Activated CD8-positive, alpha-beta T cell treated with anti-CD3 and anti-CD28 coated beads for 36 hours (primary cell): ENCODE measurements at regions of chr20 and their contacts with region 1.

Region 1: DNA sequence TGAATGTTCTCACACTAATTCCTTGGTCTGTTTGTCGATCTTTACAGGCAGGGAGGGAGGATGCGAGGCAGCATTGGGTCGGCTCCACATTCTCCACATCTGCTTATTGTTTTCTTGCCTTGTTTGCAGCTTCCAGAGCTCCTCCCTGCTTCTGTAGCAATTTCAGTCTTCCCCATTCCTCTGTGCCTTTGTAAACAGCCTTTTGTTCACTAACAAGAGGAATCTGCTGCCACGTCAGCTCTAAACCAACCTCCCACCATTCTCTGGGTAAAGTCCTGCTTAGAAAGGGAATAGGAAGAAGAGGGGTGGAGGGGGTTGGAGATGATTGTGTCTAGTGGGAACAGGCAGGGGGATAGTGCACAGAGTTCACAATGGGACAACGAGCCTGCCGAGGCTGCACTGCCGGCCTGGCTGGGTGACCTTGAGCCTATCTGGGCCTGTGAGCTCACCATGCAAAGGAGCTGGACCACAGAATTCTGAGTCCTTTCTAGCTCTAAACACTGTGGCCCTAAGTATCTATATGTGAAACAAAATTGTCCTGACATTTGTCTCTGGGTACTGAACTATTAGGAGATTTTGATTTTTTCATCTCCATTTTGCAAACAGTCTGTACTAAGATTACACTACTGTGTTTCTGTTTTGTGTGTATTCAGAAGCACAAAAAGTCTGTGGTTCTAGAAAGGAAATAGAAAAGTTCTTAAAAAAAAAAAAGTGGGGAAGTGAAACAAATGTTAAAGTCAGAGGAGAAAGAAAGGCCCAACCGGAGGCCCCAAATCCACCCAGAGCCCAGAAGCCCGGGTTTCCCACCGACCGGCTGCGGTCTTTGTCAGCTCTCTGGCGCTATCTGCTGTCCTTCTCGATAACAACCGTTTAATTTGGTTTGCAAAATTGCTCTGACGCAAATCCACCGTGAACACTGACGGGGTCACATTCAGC is 1.4 kb upstream of the PRND start:
- DNase-seq: peak; percentile 86
- ATAC-seq: peak; percentile 98
- H3K4me3 Mint-ChIP-seq: no peak overlapping the region
- H3K27ac Mint-ChIP-seq: peak overlapping the region; percentile 46
- H3K4me1 Mint-ChIP-seq: peaks cover 8% of the 10 kb centered on the region
- H3K27me3 Mint-ChIP-seq: no peaks in the 10 kb centered on the region
- CTCF ChIP-seq: peak; percentile 86

Region 2: DNA sequence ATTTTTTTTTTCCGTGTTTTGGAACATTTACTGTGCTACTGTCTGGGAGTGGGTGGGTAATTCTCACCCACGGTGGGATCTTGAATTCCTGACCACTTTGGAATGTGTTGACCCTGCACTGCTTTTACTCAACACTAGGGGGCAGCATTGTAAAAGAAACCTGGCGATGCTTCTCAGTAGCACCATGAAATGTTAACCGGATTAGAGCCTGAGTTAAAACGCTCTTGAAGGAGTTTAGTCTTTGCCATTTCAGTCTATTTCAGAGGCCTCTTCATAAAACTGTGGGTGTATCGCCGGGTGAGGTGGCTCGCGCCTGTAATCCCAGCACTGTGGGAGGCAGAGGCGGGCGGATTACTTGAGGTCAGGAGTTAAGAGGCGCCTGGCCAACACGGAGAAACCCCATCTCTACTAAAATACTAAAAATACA is 113.0 kb before region 1 on chr20:
- CTCF ChIA-PET with region 1: interaction called, 27 read pairs
- POLR2A ChIA-PET with region 1: no interaction called
- intact Hi-C with region 1: loop called (anchors 1 kb)
- DNase-seq: peak; percentile 66
- ATAC-seq: peak; percentile 79
- H3K4me3 Mint-ChIP-seq: no peak overlapping the region
- H3K27ac Mint-ChIP-seq: no peak overlapping the region
- H3K4me1 Mint-ChIP-seq: no peaks in the 10 kb centered on the region
- H3K27me3 Mint-ChIP-seq: peaks cover 5% of the 10 kb centered on the region
- CTCF ChIP-seq: peak; percentile 99

Region 3: DNA sequence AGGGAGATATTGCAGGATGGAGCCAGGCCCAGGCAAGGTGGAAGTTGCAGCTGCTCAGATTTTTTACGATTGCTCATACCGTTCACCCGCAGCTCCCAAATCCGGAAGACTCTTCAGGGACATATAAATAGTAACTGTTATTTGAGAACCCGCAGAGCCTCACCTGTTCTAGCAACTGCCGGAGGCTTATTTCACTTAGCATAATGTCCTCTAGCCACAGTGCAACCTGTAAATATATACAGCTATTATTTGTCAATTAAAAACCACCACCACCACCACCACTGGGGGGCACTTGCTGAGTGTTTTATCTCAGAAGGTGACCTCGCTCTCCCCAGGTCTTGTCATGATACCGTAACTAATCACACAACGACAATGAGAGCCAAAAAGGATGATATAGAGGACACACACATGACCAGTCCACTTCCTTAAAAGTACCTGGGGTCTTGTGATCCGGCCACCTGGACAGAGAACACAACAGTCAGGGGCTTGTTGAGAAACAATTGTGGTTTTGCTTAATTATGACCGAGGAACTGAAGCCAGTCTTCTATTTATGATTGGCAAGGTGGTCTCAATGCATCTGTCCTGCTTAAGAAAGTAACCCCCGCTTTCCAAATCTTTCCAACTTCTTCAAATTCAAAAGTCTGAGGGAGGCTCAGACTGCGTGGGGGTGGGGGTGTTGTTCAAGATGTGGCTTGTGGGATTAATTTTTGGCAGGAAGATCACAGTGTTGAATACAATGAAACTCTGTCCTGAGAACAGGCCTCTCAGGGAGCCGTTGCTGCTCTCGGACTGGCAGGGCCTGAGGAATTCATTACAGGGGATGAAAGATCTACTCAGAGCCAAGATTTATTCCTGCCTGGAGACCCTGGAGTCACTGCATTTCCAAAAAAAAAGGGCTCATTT is 106.3 kb before region 1 on chr20:
- CTCF ChIA-PET with region 1: interaction called, 25 read pairs
- POLR2A ChIA-PET with region 1: no interaction called
- intact Hi-C with region 1: no loop called
- DNase-seq: peak; percentile 89
- ATAC-seq: peak; percentile 90
- H3K4me3 Mint-ChIP-seq: no peak overlapping the region
- H3K27ac Mint-ChIP-seq: no peak overlapping the region
- H3K4me1 Mint-ChIP-seq: peaks cover 2% of the 10 kb centered on the region
- H3K27me3 Mint-ChIP-seq: no peaks in the 10 kb centered on the region
- CTCF ChIP-seq: peak; percentile 60